ENCODE measurements at regions of chr2 and their contacts with region 1.

Region 1: GRCh38 chr2:84970868-84971509 is at the start of gene KCMF1:
- DNase-seq: peak; percentile 56 to 83 (median 68)
- ATAC-seq: peak; percentile 72
- H3K4me3 ChIP-seq: peak within 1 kb of the TSS; percentile 85
- H3K4me3 Mint-ChIP-seq: peak within 1 kb of the TSS; percentile 89 to 100 (median 99)
- H3K27ac ChIP-seq: peak within 1 kb of the TSS; percentile 95
- H3K27ac Mint-ChIP-seq: peak within 1 kb of the TSS; percentile 97 to 100 (median 99)
- H3K4me1 ChIP-seq: peaks cover 31 to 33% of the 10 kb centered on the region in 2 donors
- H3K4me1 Mint-ChIP-seq: peaks cover 44 to 67% (median 57%) of the 10 kb centered on the region in 7 donors
- H3K27me3 ChIP-seq: no peaks in the 10 kb centered on the region
- H3K27me3 Mint-ChIP-seq: peaks cover 0 to 4% (median 0%) of the 10 kb centered on the region in 5 donors
- total RNA-seq, gene KCMF1: 57.7 to 81.3 (median 60.8) TPM

Region 2: GRCh38 chr2:84152462-84152861 is 818.5 kb before region 1 on chr2:
- CTCF ChIA-PET with region 1: no interaction called
- POLR2A ChIA-PET with region 1: no interaction called
- intact Hi-C with region 1: no loop called
- DNase-seq: no peak
- ATAC-seq: no peak
- H3K4me3 ChIP-seq: no peak overlapping the region
- H3K4me3 Mint-ChIP-seq: no peak overlapping the region
- H3K27ac ChIP-seq: no peak overlapping the region
- H3K27ac Mint-ChIP-seq: no peak overlapping the region
- H3K4me1 ChIP-seq: no peaks in the 10 kb centered on the region
- H3K4me1 Mint-ChIP-seq: no peaks in the 10 kb centered on the region
- H3K27me3 ChIP-seq: no peaks in the 10 kb centered on the region
- H3K27me3 Mint-ChIP-seq: peaks cover 0 to 17% (median 5%) of the 10 kb centered on the region in 5 donors

Region 3: DNA sequence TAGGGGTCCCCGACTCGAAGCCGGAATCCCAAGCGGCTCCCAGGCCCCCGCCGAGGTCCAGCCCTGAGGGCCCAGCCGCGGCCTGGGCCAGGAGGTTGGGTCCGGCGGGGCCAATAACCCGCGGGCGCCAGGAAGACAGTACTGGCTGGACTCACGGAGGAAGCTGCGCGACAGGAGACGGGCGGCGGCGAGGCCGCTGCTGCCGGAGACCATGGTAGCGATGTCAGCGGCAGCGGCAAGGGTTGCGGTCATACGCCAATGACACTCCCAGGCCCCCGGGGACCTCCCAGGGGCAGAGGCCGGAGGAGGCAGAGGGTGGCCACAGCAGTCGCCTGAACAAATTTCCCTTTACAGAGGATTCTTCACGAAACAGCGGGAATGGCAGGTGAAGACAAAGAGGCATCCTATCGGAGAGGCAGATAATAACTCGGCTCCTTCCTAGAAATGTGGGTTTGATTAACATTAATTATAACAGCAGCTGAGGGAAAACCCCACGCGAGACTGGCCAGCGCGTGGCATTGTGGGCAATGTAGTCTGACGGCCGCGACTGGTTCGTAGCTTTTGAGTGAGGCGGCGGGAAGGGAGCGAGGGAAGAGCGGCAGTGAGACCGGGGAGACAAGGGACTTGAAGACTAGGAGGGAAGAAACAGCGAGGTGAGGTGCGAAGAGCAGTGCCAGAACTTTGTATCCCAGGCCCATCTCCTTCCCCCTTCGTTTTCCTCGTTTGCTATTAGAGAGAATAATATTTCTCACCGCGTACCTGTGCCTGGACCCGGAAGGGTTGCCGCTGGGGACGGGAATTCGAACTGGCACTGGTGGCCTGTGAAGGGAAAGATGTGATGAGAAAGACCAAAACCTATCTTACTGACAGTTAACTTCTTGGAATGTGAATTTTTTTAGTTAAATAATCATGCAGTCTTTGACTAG is 511.7 kb before region 1 on chr2 and contains the start of gene SUCLG1:
- CTCF ChIA-PET with region 1: no interaction called
- POLR2A ChIA-PET with region 1: no interaction called
- intact Hi-C with region 1: loop called in 1 of 2 experiments (anchors 1 kb)
- DNase-seq: peak; percentile 72 to 88 (median 84)
- ATAC-seq: peak; percentile 98
- H3K4me3 ChIP-seq: peak within 1 kb of the TSS; percentile 69
- H3K4me3 Mint-ChIP-seq: peak within 1 kb of the TSS; percentile 90 to 100 (median 96)
- H3K27ac ChIP-seq: peak within 1 kb of the TSS; percentile 94
- H3K27ac Mint-ChIP-seq: peak within 1 kb of the TSS; percentile 91 to 99 (median 99)
- H3K4me1 ChIP-seq: peaks cover 9 to 24% of the 10 kb centered on the region in 2 donors
- H3K4me1 Mint-ChIP-seq: peaks cover 33 to 56% (median 50%) of the 10 kb centered on the region in 7 donors
- H3K27me3 ChIP-seq: no peaks in the 10 kb centered on the region
- H3K27me3 Mint-ChIP-seq: no peaks in the 10 kb centered on the region
- total RNA-seq, gene SUCLG1: 45.1 to 63.6 (median 47.9) TPM

Region 4: GRCh38 chr2:84516234-84516986 is 454.6 kb before region 1 on chr2 and contains the start of gene DNAH6:
- CTCF ChIA-PET with region 1: no interaction called
- POLR2A ChIA-PET with region 1: no interaction called
- intact Hi-C with region 1: loop called in 1 of 2 experiments (anchors 1 kb)
- DNase-seq: peak; percentile 67 to 94 (median 89)
- ATAC-seq: peak; percentile 99
- H3K4me3 ChIP-seq: peak within 1 kb of the TSS; percentile 78
- H3K4me3 Mint-ChIP-seq: peak within 1 kb of the TSS; percentile 79 to 93 (median 90)
- H3K27ac ChIP-seq: peak within 1 kb of the TSS; percentile 75
- H3K27ac Mint-ChIP-seq: peak within 1 kb of the TSS; percentile 66 to 98 (median 93)
- H3K4me1 ChIP-seq: peaks cover 5 to 6% of the 10 kb centered on the region in 2 donors
- H3K4me1 Mint-ChIP-seq: peaks cover 6 to 27% (median 23%) of the 10 kb centered on the region in 7 donors
- H3K27me3 ChIP-seq: no peaks in the 10 kb centered on the region
- H3K27me3 Mint-ChIP-seq: peaks cover 0 to 41% (median 0%) of the 10 kb centered on the region in 5 donors
- total RNA-seq, gene DNAH6: 0.73 to 2.3 (median 1.1) TPM

Region 5: DNA sequence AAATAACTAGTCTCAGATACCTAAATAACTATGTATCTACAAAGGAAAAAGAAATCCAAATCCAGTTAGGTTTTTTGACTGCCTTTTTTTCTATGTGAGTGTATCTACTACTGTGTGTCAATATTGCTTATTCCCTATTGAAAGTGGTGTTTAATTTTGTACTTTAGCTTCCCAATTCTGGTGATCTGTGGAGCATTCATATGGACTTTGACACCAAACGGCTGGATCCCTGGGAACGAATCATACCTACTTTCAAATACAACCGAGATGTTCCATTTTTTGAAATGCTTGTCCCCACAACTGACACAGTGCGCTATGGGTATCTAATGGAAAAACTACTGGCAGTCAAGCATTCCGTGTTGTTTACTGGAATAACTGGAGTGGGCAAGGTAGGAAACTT is 301.9 kb before region 1 on chr2:
- CTCF ChIA-PET with region 1: no interaction called
- POLR2A ChIA-PET with region 1: no interaction called
- intact Hi-C with region 1: no loop called
- DNase-seq: no peak
- ATAC-seq: no peak
- H3K4me3 ChIP-seq: no peak overlapping the region
- H3K4me3 Mint-ChIP-seq: no peak overlapping the region
- H3K27ac ChIP-seq: no peak overlapping the region
- H3K27ac Mint-ChIP-seq: no peak overlapping the region
- H3K4me1 ChIP-seq: no peaks in the 10 kb centered on the region
- H3K4me1 Mint-ChIP-seq: peaks cover 0 to 41% (median 22%) of the 10 kb centered on the region in 7 donors
- H3K27me3 ChIP-seq: no peaks in the 10 kb centered on the region
- H3K27me3 Mint-ChIP-seq: peaks cover 0 to 14% (median 0%) of the 10 kb centered on the region in 5 donors

Region 6: DNA sequence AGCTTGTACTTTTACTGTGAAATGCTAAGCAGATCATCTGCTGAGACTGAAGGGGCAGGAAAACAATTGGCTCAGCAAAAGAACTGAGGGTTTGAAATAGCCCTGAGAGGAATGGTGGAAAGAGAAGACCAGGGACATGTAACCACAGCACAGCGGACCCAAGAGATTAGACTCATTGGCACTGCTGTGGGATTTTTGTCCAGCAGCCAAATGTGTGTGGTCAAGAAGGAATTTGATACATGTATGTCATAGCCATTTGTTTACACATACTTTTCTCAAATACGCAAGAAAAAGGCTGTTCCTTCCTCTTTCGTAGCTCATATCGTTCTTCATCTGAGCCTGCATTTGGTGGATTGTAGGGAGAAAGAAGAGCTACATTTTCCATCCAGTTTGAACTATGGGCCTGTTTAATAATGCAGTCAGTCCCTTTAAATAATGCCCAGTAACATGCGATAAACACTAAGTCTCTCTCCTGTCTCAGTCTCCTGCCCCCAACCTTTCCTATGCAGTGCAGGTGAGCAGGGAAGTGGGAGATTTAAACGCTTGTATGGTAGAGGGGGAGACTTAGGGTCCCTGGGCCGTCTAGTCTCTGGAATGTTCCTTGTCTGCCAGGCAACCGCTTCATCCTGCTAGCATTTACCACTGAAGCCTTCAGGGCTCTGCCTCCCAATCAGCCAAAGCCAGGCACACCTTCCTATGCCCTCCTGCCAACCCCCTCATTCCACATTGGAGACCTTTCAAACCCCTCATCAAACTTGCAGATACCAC is 163.7 kb before region 1 on chr2:
- CTCF ChIA-PET with region 1: no interaction called
- POLR2A ChIA-PET with region 1: no interaction called
- intact Hi-C with region 1: no loop called
- DNase-seq: no peak
- ATAC-seq: no peak
- H3K4me3 ChIP-seq: no peak overlapping the region
- H3K4me3 Mint-ChIP-seq: peak overlapping the region in 1 of 10 donors; percentile 15
- H3K27ac ChIP-seq: no peak overlapping the region
- H3K27ac Mint-ChIP-seq: peak overlapping the region in 5 of 9 donors; percentile 44 to 78 (median 70)
- H3K4me1 ChIP-seq: peaks cover 0 to 3% of the 10 kb centered on the region in 2 donors
- H3K4me1 Mint-ChIP-seq: peaks cover 5 to 53% (median 52%) of the 10 kb centered on the region in 7 donors
- H3K27me3 ChIP-seq: no peaks in the 10 kb centered on the region
- H3K27me3 Mint-ChIP-seq: no peaks in the 10 kb centered on the region

Region 7: GRCh38 chr2:84865181-84865783 is 105.7 kb before region 1 on chr2:
- CTCF ChIA-PET with region 1: no interaction called
- POLR2A ChIA-PET with region 1: no interaction called
- intact Hi-C with region 1: no loop called
- DNase-seq: peak in 5 of 9 donors; percentile 43 to 67 (median 53)
- ATAC-seq: peak; percentile 72
- H3K4me3 ChIP-seq: no peak overlapping the region
- H3K4me3 Mint-ChIP-seq: peak overlapping the region; percentile 32 to 89 (median 74)
- H3K27ac ChIP-seq: peak overlapping the region; percentile 73
- H3K27ac Mint-ChIP-seq: peak overlapping the region; percentile 70 to 99 (median 96)
- H3K4me1 ChIP-seq: peaks cover 12 to 74% of the 10 kb centered on the region in 2 donors
- H3K4me1 Mint-ChIP-seq: peaks cover 51 to 97% (median 91%) of the 10 kb centered on the region in 7 donors
- H3K27me3 ChIP-seq: no peaks in the 10 kb centered on the region
- H3K27me3 Mint-ChIP-seq: no peaks in the 10 kb centered on the region

Region 8: GRCh38 chr2:84939426-84940087 is 31.4 kb before region 1 on chr2:
- CTCF ChIA-PET with region 1: interaction called, 3 read pairs
- POLR2A ChIA-PET with region 1: interaction called, 112 read pairs
- intact Hi-C with region 1: loop called (anchors 1 kb)
- DNase-seq: peak; percentile 31 to 76 (median 65)
- ATAC-seq: peak; percentile 92
- H3K4me3 ChIP-seq: peak overlapping the region; percentile 29
- H3K4me3 Mint-ChIP-seq: peak overlapping the region; percentile 66 to 90 (median 82)
- H3K27ac ChIP-seq: peak overlapping the region; percentile 72
- H3K27ac Mint-ChIP-seq: peak overlapping the region; percentile 88 to 100 (median 98)
- H3K4me1 ChIP-seq: peaks cover 20 to 21% of the 10 kb centered on the region in 2 donors
- H3K4me1 Mint-ChIP-seq: peaks cover 17 to 68% (median 34%) of the 10 kb centered on the region in 7 donors
- H3K27me3 ChIP-seq: no peaks in the 10 kb centered on the region
- H3K27me3 Mint-ChIP-seq: no peaks in the 10 kb centered on the region

Region 9: DNA sequence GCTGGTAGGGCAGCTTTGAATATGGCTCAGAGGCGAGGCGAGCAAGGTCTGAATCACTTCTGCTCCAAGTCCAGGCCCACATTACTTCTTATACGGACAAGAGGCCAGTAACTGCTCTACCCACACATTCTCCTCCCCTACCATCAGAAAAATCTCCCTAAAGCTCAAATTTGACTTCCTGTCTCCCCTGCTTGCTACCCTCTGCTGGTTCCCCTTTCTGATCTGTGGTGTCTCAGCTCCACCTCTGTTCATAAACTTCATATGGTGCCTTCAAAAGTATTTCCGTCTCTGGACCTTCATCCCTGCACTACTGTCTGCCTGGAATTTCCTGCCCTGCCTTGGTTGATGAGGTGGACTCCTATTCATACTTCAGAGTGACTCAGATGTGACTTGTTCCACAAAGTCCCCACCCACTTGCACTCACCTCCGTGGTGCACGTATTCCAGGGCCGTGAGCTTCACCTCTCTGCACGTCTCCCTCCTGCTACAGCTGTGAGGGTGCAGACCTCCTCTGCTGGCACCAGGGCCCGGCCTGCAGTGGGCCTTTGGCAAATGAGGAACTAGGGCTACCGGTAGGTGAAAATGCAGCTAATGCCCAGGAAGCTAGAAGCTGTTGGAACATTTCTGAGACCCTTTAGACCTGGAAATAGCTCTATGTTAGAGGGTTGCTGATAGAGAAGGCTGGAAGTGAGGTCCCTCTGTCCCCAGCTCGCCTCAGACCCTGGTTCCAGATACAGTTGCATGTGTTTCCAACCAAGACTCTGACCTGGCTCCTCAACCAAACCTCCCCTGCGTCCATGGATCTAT is 24.6 kb before region 1 on chr2:
- CTCF ChIA-PET with region 1: interaction called, 5 read pairs
- POLR2A ChIA-PET with region 1: interaction called, 112 read pairs
- intact Hi-C with region 1: loop called (anchors 1 to 2 kb)
- DNase-seq: peak; percentile 20 to 74 (median 57)
- ATAC-seq: peak; percentile 90
- H3K4me3 ChIP-seq: peak overlapping the region; percentile 9
- H3K4me3 Mint-ChIP-seq: peak overlapping the region; percentile 43 to 83 (median 72)
- H3K27ac ChIP-seq: peak overlapping the region; percentile 64
- H3K27ac Mint-ChIP-seq: peak overlapping the region; percentile 42 to 93 (median 81)
- H3K4me1 ChIP-seq: peaks cover 16 to 23% of the 10 kb centered on the region in 2 donors
- H3K4me1 Mint-ChIP-seq: peaks cover 27 to 66% (median 32%) of the 10 kb centered on the region in 7 donors
- H3K27me3 ChIP-seq: no peaks in the 10 kb centered on the region
- H3K27me3 Mint-ChIP-seq: no peaks in the 10 kb centered on the region

Region 10: DNA sequence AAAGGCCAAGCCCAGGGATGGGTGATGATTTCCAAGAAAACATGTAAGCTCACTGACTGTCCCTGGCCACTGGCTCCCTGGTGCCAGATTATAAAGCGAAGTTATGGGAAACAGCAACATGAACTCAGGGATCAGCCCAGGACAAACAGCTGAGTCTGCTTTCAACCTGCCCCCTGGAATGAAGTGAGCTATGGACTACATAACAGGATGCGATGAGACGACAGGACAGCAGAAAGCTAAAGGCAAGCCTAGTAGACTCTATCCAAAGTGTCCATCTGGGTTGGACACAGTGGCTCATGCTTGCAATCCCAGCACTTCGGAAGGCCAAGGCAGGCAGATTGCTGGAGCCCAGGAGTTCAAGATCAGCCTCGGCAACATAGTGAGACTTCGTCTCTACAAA is 16.7 kb before region 1 on chr2:
- CTCF ChIA-PET with region 1: no interaction called
- POLR2A ChIA-PET with region 1: interaction called, 7 read pairs
- intact Hi-C with region 1: loop called in 1 of 2 experiments (anchors 2 kb)
- DNase-seq: no peak
- ATAC-seq: no peak
- H3K4me3 ChIP-seq: no peak overlapping the region
- H3K4me3 Mint-ChIP-seq: no peak overlapping the region
- H3K27ac ChIP-seq: no peak overlapping the region
- H3K27ac Mint-ChIP-seq: peak overlapping the region in 2 of 9 donors; percentile 11 to 47
- H3K4me1 ChIP-seq: no peaks in the 10 kb centered on the region
- H3K4me1 Mint-ChIP-seq: peaks cover 7 to 23% (median 11%) of the 10 kb centered on the region in 7 donors
- H3K27me3 ChIP-seq: no peaks in the 10 kb centered on the region
- H3K27me3 Mint-ChIP-seq: no peaks in the 10 kb centered on the region

Region 11: GRCh38 chr2:85017411-85018048 is 46.5 kb after region 1 on chr2:
- CTCF ChIA-PET with region 1: interaction called, 3 read pairs
- POLR2A ChIA-PET with region 1: interaction called, 4 read pairs
- intact Hi-C with region 1: loop called (anchors 2 kb)
- DNase-seq: peak in 4 of 9 donors; percentile 17 to 30 (median 24)
- ATAC-seq: no peak
- H3K4me3 ChIP-seq: no peak overlapping the region
- H3K4me3 Mint-ChIP-seq: peak overlapping the region in 4 of 10 donors; percentile 5 to 39 (median 32)
- H3K27ac ChIP-seq: no peak overlapping the region
- H3K27ac Mint-ChIP-seq: peak overlapping the region in 8 of 9 donors; percentile 8 to 67 (median 38)
- H3K4me1 ChIP-seq: peaks cover 2 to 15% of the 10 kb centered on the region in 2 donors
- H3K4me1 Mint-ChIP-seq: peaks cover 41 to 78% (median 66%) of the 10 kb centered on the region in 7 donors
- H3K27me3 ChIP-seq: no peaks in the 10 kb centered on the region
- H3K27me3 Mint-ChIP-seq: no peaks in the 10 kb centered on the region